Gastrocnemius medialis (tissue), 4 donors: ENCODE measurements at regions of chr3 and their contacts with region 1.

Region 1: GRCh38 chr3:11651900-11652299 is 8.2 kb upstream of the VGLL4 start:
- DNase-seq: no peak
- ATAC-seq: no peak
- H3K4me3 ChIP-seq: no peak overlapping the region
- H3K27ac ChIP-seq: no peak overlapping the region
- H3K4me1 ChIP-seq: peaks cover 0 to 5% of the 10 kb centered on the region in 2 donors
- H3K27me3 ChIP-seq: no peaks in the 10 kb centered on the region
- CTCF ChIP-seq: peak; percentile 53 to 73 (median 63)
- POLR2A ChIP-seq: no peak

Region 2: GRCh38 chr3:10322352-10322710 is 1329.6 kb before region 1 on chr3:
- in situ Hi-C with region 1: no loop called
- intact Hi-C with region 1: loop called (anchors 5 kb)
- DNase-seq: no peak
- ATAC-seq: no peak
- H3K4me3 ChIP-seq: no peak overlapping the region
- H3K27ac ChIP-seq: no peak overlapping the region
- H3K4me1 ChIP-seq: peaks cover 20 to 31% of the 10 kb centered on the region in 2 donors
- H3K27me3 ChIP-seq: no peaks in the 10 kb centered on the region
- CTCF ChIP-seq: no peak
- POLR2A ChIP-seq: no peak

Region 3: GRCh38 chr3:10945683-10946287 is 706.1 kb before region 1 on chr3:
- in situ Hi-C with region 1: loop called in 1 of 4 experiments (anchors 25 kb)
- intact Hi-C with region 1: no loop called
- DNase-seq: peak in 1 of 2 donors; percentile 22
- ATAC-seq: peak; percentile 42 to 78
- H3K4me3 ChIP-seq: no peak overlapping the region
- H3K27ac ChIP-seq: no peak overlapping the region
- H3K4me1 ChIP-seq: no peaks in the 10 kb centered on the region
- H3K27me3 ChIP-seq: peaks cover 0 to 10% (median 0%) of the 10 kb centered on the region in 3 donors
- CTCF ChIP-seq: peak; percentile 57 to 91 (median 89)
- POLR2A ChIP-seq: no peak

Region 4: GRCh38 chr3:11236595-11237461 is 415.1 kb before region 1 on chr3:
- in situ Hi-C with region 1: no loop called
- intact Hi-C with region 1: loop called (anchors 5 kb)
- DNase-seq: peak in 1 of 2 donors; percentile 48
- ATAC-seq: peak in 1 of 2 donors; percentile 60
- H3K4me3 ChIP-seq: no peak overlapping the region
- H3K27ac ChIP-seq: no peak overlapping the region
- H3K4me1 ChIP-seq: no peaks in the 10 kb centered on the region
- H3K27me3 ChIP-seq: peaks cover 0 to 3% (median 0%) of the 10 kb centered on the region in 3 donors
- CTCF ChIP-seq: peak; percentile 22 to 83 (median 62)
- POLR2A ChIP-seq: no peak

Region 5: DNA sequence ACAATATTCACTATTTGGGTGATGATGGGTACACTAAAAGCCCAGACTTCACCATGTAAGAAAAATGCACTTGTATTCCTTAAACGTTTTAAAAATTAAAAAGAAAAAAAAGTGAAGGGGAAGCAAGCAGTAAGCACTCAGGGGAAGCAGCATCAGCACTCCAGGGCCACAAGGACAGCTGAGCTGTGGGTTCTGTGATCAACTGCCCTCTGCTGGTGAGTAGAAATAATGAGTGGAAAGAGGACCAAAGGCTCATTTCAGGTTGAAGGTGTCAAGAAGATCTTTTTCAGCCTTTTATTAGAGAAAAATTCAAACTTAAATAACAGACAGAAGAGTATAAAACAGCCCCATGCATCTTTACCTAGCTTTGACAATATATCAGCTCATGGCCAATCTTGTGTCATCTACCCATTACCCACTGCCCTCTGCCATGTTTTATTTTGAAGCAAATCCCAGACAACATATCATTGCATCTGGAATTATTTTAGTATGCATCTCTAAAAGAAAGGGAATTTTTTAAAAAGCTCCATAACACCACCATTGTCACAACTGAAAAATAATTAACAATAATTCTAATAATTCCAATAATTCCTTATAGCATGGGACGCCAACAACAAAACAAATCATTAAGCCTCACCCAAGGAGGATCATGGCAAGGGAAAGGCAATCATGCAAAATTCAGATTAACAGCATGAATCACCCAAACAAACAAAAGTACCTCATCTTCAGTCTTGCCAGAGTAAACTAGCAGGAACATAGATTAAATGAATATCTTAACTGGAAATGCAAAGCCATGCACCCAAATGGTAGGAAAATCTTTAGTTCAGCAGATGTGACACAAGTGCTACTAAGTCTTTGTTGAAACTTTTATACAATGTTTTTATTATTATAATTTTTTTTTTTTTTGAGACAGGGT is 152.3 kb after region 1 on chr3:
- in situ Hi-C with region 1: loop called in 3 of 4 experiments (anchors 10 kb)
- intact Hi-C with region 1: loop called (anchors 5 kb)
- DNase-seq: peak in 1 of 2 donors; percentile 8
- ATAC-seq: peak in 1 of 2 donors; percentile 72
- H3K4me3 ChIP-seq: no peak overlapping the region
- H3K27ac ChIP-seq: no peak overlapping the region
- H3K4me1 ChIP-seq: no peaks in the 10 kb centered on the region
- H3K27me3 ChIP-seq: no peaks in the 10 kb centered on the region
- CTCF ChIP-seq: peak; percentile 30 to 69 (median 61)
- POLR2A ChIP-seq: no peak